AG04449 (cell line): ENCODE measurements at regions of chr9 and their contacts with region 1.

Region 1: DNA sequence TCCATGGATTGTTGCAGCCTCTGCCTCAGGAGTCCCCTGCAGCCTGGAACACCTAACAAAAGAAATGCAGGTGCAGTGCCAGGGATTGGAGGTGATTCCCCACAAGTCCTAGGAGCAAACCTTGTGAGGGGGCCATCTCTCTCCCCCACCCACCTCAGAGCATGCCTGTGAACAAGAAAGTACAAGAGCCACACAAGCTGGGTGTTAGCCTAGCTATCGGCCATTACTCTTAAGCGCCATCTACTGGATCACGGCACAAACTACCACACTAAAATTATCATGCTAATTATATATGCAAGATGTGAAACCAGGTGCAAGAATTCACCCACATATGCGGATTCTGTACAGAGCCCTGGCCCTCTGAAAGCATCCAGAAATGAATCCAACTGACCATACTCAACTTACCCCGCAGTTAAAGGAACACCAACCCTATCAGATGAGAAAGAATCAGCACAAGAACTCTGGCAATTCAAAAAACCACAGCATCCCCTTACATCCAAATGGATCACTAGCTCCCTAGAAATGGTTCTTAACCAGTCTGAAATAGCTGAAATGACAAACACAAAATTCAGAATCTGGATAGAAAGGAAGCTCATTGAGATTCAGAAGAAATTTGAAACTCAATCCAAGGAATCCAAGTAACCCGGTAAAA is 16.5 kb upstream of the PRSS3 start:
- DNase-seq: no peak
- H3K4me3 ChIP-seq: no peak overlapping the region
- CTCF ChIP-seq: peak; percentile 71

Region 2: DNA sequence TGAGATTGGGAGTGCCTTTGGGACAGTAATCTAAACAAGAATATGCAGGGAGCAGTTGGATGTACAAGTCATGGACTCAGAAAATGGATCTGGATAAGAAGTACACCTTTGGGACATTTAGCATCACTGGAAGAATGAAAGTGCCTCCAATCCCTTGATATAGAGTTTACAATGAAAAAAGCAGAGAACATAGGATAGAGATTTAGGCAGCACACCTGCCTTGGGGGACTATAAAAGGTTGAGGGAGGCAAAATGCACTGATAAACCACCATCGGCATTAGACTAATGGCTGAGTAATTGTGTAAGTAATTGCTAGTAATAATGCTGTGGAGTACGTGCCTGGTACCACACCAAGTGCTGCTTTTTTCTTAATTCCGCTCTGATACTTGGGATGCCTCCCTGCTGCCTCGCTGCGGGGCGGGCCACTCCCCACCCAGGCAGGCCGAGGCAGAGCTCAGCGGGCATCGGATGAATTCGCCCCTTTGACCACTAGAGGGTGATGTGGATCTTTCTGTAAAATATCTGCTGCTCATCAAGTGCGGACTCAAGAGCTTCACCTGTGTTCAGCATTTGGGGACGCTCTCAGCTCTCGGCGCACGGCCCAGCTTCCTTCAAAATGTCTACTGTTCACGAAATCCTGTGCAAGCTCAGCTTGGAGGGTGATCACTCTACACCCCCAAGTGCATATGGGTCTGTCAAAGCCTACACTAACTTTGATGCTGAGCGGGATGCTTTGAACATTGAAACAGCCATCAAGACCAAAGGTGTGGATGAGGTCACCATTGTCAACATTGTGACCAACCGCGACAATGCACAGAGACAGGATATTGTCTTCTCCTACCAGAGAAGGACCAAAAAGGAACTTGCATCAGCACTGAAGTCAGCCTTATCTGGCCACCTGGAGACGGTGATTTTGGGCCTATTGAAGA is 154.9 kb before region 1 on chr9:
- CTCF ChIA-PET with region 1: interaction called, 15 read pairs
- POLR2A ChIA-PET with region 1: no interaction called
- DNase-seq: no peak
- H3K4me3 ChIP-seq: no peak overlapping the region
- CTCF ChIP-seq: peak; percentile 79

Region 3: DNA sequence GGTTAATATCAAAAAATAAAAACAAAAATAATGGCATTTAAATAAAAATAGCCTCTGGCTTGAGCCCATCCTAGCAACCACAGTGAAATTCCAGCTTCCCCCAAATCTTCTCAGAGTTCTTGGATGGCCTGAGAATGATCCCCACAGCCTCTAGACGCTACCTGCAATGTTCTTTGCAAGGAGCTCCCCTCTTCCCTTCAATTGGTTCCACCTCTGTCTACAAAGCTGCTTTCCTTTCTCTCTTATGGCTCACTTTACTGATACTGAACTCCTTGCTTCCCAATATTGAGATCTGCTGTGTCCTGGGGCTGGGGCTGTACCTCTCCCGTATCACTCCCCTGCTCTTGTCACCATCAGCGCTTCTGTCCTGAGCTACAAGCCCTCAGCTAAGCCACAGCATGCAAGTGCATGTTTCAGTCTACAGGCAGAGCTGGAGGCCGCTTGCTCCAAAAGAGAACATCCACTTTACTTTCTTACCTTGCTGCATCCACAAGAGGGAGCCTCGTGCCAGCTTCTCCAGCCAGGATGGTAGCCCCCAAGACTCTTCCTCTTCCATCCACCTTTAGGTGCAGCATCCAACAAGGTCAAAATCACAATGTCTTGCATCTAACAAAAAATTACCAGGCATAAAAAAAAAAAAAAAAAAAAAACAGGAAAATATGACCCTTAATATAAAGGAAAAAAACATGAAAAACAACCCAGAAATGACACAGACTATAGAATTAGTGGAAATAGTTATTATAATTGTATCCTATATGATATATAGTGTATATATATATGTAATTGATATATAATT is 40.8 kb before region 1 on chr9:
- CTCF ChIA-PET with region 1: interaction called, 52 read pairs
- POLR2A ChIA-PET with region 1: no interaction called
- DNase-seq: peak; percentile 14
- H3K4me3 ChIP-seq: no peak overlapping the region
- CTCF ChIP-seq: peak; percentile 79

Region 4: GRCh38 chr9:33750307-33750838 is 28.5 kb before region 1 on chr9:
- CTCF ChIA-PET with region 1: interaction called, 13 read pairs
- POLR2A ChIA-PET with region 1: no interaction called
- DNase-seq: no peak
- H3K4me3 ChIP-seq: peak overlapping the region; percentile 54
- CTCF ChIP-seq: no peak

Region 5: GRCh38 chr9:33765411-33765810 is 13.4 kb before region 1 on chr9:
- CTCF ChIA-PET with region 1: interaction called, 20 read pairs
- POLR2A ChIA-PET with region 1: no interaction called
- DNase-seq: no peak
- H3K4me3 ChIP-seq: no peak overlapping the region
- CTCF ChIP-seq: no peak

Region 6: DNA sequence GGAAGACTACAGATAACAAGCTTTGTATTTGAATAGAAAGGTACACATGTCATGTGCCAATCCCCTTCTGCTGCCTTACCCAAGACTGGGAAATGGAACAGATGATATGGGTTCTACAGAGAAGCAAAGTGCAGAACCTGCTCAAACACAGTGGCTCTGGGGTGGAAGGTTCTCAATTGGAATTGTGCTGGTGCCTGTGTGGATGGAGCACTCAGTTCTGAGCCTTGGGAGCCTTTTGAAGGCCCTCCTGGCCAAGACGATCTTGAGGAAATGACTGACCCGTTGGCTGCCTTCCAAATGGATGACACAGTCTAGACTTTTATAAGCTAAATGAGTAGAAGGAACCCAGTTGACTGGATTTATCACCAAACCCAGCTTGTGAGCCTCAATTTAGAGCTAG is 12.3 kb after region 1 on chr9:
- CTCF ChIA-PET with region 1: interaction called, 23 read pairs
- POLR2A ChIA-PET with region 1: no interaction called
- DNase-seq: no peak
- H3K4me3 ChIP-seq: no peak overlapping the region
- CTCF ChIP-seq: no peak

Region 7: GRCh38 chr9:33800886-33801285 is 22.1 kb after region 1 on chr9:
- CTCF ChIA-PET with region 1: interaction called, 15 read pairs
- POLR2A ChIA-PET with region 1: interaction called, 3 read pairs
- DNase-seq: no peak
- H3K4me3 ChIP-seq: no peak overlapping the region
- CTCF ChIP-seq: no peak